Activated naive CD4-positive, alpha-beta T cell treated with anti-CD3 and anti-CD28 coated beads for 36 hours (primary cell): ENCODE measurements at regions of chrX and their contacts with region 1.

Region 1: GRCh38 chrX:24464836-24465531 is at the start of gene PDK3:
- DNase-seq: peak; percentile 85
- H3K4me3 Mint-ChIP-seq: peak within 1 kb of the TSS; percentile 81
- H3K27ac Mint-ChIP-seq: peak within 1 kb of the TSS; percentile 82
- H3K4me1 Mint-ChIP-seq: peaks cover 30% of the 10 kb centered on the region
- H3K27me3 Mint-ChIP-seq: no peaks in the 10 kb centered on the region
- total RNA-seq, gene PDK3: 31.7 to 32.3 TPM

Region 2: DNA sequence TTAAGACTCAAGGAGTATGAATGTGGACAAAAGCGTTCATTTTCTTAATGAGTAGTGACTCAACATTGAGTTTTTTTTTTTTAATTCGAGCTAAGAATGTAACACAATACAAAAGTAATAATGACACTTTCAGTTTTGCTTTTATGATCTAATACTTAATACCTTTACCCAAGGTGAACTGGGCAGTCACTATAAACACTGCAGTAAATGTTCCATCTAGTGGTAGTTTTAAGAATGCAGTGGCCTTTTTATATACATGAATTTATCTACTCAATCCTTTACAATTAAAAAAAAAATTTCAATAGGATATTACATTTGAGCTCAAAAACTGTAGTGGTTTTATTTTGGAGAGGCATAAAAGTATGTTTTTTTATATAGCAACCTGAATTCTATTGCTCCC is 34.0 kb after region 1 on chrX:
- CTCF ChIA-PET with region 1: interaction called, 12 read pairs
- intact Hi-C with region 1: loop called (anchors 1 kb)
- DNase-seq: no peak
- H3K4me3 Mint-ChIP-seq: no peak overlapping the region
- H3K27ac Mint-ChIP-seq: no peak overlapping the region
- H3K4me1 Mint-ChIP-seq: peaks cover 24% of the 10 kb centered on the region
- H3K27me3 Mint-ChIP-seq: no peaks in the 10 kb centered on the region